Right ventricle myocardium inferior (tissue), 1 donor: ENCODE measurements at regions of chrX and their contacts with region 1.

Region 1: DNA sequence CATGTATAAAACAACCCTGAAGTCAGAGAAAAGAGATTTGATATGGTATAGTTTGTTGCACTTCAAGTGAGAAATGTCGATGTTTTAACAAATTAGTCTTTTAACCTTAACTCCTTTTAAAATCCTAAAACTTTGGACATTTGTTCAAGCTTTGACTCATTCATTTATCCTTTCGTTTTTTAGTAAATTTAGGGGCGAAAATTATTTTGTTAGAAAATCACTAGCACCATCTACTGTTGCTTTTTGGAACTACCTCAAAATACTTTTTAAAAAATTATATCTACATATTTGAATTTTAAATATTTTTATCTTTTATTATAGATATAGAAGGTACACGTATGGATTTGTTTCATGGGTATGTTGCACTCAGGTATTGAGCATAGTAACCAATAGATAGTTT is 165.1 kb upstream of the POF1B start:
- DNase-seq: no peak
- ATAC-seq: no peak

Region 2: DNA sequence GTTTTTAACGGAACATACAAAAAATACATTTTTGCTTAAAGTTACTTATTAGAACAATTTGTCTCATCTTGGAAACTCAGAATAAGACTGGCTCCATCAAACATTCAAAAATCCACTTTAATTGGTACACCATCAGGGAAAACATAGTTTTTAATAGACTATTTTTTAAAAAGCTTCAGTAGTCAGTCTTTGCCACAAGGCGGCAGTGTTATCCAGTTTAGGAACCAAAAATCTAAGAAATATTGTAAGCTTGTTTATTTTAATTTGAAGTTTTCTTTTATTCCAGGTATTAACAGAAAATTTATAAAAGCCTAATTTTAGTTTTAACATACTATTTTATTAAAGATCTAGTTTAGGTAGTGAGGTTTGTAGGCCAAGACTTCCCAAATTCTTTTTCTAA is 433.3 kb before region 1 on chrX:
- intact Hi-C with region 1: loop called (anchors 5 kb)
- DNase-seq: no peak
- ATAC-seq: no peak